RWPE1 (cell line): ENCODE measurements at regions of chr2 and their contacts with region 1.

Region 1: DNA sequence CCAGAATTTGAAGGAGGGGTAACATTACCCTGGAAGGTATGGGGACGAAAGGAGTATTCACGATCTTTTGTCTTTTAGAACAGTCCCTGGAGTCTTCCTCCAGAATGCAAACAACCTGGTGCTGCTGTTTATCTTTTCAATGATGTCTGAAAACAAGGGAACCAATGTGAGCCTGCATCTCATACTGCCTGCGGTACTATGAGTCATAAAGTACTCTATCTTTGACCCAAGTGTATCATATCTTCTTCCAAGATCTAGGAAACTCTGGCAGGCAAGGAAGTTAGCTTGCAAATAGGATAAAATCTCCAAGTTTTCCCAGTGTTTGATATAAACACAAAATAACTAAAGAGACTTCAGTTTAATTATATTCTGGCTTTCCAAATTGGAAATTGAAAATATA is 968.5 kb downstream of the LRP1B start:
- DNase-seq: no peak
- H3K27ac ChIP-seq: no peak overlapping the region
- CTCF ChIP-seq: no peak

Region 2: DNA sequence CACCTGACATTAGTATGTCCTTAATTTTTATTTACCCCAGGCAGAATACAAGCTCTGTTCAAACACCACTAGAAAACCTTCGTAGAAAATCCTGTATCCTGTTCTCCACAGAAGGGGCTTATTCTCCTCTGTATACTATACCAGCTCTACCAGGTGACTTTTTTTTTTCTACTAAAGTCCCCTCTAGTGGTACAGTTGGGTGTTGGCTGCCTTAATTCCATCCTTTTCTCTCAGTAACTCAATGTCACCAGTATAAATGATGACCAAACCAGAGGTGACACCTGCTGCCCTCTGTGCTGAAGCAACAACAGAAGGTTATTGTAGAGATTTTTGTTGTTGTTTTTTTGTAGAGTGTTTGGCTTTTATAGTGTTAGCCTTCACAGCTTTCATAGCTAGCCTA is 353.5 kb before region 1 on chr2:
- CTCF ChIA-PET with region 1: interaction called, 10 read pairs
- POLR2A ChIA-PET with region 1: no interaction called
- DNase-seq: no peak
- H3K27ac ChIP-seq: no peak overlapping the region
- CTCF ChIP-seq: no peak

Region 3: GRCh38 chr2:141055531-141055930 is 106.8 kb before region 1 on chr2:
- CTCF ChIA-PET with region 1: no interaction called
- POLR2A ChIA-PET with region 1: no interaction called
- DNase-seq: peak; percentile 29
- H3K27ac ChIP-seq: no peak overlapping the region
- CTCF ChIP-seq: no peak

Region 4: DNA sequence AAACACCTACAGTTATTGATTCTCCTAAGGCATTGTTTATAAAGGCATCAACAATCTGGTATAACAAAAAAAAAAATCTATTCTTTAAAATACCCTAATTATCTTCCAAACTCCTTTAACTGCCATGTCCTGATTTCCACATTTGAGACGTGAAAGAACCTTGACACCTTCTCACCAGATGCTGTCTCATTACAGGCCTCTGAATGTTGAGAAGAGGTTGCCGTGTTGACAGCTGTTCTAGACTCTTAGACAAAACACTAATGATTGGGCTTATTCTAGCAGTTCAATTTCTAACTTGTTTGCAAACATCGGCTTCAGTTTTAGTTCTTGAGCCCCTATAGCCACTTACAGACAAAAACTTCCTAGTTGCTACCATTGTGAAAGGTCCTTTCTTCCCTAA is 20.3 kb before region 1 on chr2:
- CTCF ChIA-PET with region 1: interaction called, 14 read pairs
- POLR2A ChIA-PET with region 1: no interaction called
- DNase-seq: no peak
- H3K27ac ChIP-seq: no peak overlapping the region
- CTCF ChIP-seq: no peak

Region 5: DNA sequence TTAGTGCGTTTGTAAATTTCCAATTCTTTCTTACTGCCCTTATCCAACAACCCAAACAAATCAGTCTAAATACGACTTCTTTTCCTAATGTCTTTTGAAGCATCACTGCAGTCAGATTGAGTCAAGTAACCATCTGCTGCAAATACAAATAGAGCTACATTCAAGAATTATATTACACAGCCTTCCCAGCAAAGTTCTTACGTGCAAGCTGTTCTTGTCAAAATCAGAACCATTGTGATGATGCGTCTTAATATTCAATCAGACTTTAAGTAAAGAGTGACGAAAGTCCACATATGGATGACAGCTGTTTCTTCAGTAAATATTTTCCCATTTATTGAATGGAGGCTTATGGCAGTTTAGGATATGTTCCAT is 24.7 kb after region 1 on chr2:
- CTCF ChIA-PET with region 1: no interaction called
- POLR2A ChIA-PET with region 1: no interaction called
- DNase-seq: no peak
- H3K27ac ChIP-seq: no peak overlapping the region
- CTCF ChIP-seq: no peak